Tibial artery (tissue), 4 donors: ENCODE measurements at regions of chr1 and their contacts with region 1.

Region 1: DNA sequence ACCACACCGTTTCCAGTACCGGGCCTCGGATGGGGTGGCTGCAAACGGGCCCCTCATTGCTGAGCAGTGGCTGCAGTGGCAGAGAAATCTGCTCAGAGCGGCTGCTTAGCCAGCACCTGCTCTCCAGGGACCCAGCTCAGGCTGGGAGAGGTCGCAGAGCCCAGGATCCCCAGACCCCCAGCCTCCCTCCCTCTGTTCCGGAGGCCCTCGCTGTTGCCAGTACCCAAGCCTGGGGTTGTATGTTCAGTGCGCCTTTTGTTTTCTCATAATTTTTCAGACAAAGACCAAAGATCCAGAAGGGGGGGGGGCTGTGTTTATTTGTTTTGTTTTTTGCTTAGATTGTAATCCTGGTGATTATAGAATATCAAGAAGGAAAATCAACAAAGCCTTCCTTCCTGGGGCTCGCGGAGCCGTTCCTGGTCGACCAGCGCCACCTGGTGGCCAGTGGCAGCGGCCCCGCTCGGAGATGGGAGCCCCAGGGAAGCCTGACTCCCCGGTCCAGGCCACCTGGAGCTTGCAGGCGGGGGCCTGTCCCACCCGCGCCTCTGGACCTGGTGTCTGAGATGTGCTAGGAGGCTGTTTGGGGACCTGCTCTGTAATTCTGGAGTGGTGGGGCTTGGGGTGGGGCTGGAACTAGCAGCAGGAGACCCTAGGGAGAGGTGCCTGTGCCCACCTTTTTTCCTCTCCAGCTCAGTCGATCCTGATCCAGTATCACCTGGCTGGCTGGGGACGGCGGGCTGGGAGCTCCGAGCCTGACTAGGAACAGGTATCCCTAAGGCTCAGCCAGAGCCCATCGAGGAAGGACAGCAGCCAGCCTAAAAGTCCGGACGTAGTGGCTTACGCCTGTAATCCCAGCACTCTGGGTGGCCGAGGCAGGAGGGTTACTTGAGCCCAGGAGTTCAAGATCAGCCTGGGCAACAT is 123.9 kb upstream of the VAMP3 start:
- DNase-seq: peak in 1 of 2 donors; percentile 47
- H3K4me3 ChIP-seq: no peak overlapping the region
- H3K27ac ChIP-seq: no peak overlapping the region
- H3K4me1 ChIP-seq: peaks cover 0 to 9% (median 3%) of the 10 kb centered on the region in 4 donors
- H3K27me3 ChIP-seq: peaks cover 0 to 39% of the 10 kb centered on the region in 2 donors
- CTCF ChIP-seq: peak; percentile 91 to 96

Region 2: DNA sequence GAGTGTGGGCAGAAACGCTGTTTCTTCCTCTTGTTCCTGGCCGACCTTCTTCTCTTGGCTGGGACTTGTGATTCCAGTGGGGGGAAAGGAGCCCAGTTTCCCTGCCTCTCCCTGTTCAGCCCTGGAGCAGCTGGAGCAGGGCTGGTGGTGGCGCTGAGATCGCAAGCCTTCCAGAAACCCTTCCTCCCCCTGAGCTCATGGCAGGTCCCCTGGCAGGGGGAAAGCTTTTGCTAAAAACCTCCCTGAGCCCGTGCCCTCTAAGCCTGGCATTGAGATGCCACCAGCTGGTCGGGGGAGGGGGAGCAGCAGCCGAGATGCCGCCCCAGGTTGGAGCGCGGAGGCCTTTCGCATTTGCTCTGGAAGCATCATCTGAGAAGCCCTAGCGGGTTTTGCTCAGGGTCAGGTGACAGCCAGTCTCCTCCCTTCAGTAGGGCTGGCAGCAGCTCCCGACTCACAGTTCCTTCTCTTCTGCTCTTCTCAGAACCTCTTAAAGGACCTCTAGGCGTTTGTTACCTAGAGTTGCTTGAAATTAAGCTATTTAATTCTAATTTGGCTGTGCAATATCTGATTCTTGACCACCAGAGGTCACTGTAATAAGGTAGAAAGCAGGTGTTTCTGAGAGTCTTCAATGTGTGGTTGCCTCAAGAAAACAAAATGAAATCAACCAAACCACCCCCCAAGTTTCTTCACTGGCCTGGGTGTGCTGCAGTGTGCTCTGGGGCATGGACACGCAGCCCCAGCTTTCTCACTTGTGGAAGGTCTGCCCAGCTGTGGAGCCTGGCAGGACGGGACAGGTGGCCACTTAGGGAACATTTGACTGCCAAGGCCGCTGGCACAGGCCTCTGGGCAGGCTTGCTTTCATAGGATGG is 604.7 kb before region 1 on chr1:
- intact Hi-C with region 1: loop called (anchors 5 kb)
- DNase-seq: no peak
- H3K4me3 ChIP-seq: no peak overlapping the region
- H3K27ac ChIP-seq: no peak overlapping the region
- H3K4me1 ChIP-seq: no peaks in the 10 kb centered on the region
- H3K27me3 ChIP-seq: peaks cover 0 to 47% of the 10 kb centered on the region in 2 donors
- CTCF ChIP-seq: peak; percentile 38 to 41

Region 3: GRCh38 chr1:7379445-7379971 is 267.7 kb before region 1 on chr1:
- intact Hi-C with region 1: no loop called
- DNase-seq: peak in 1 of 2 donors; percentile 21
- H3K4me3 ChIP-seq: no peak overlapping the region
- H3K27ac ChIP-seq: no peak overlapping the region
- H3K4me1 ChIP-seq: peaks cover 0 to 5% (median 0%) of the 10 kb centered on the region in 4 donors
- H3K27me3 ChIP-seq: peaks cover 0 to 8% of the 10 kb centered on the region in 2 donors
- CTCF ChIP-seq: no peak

Region 4: DNA sequence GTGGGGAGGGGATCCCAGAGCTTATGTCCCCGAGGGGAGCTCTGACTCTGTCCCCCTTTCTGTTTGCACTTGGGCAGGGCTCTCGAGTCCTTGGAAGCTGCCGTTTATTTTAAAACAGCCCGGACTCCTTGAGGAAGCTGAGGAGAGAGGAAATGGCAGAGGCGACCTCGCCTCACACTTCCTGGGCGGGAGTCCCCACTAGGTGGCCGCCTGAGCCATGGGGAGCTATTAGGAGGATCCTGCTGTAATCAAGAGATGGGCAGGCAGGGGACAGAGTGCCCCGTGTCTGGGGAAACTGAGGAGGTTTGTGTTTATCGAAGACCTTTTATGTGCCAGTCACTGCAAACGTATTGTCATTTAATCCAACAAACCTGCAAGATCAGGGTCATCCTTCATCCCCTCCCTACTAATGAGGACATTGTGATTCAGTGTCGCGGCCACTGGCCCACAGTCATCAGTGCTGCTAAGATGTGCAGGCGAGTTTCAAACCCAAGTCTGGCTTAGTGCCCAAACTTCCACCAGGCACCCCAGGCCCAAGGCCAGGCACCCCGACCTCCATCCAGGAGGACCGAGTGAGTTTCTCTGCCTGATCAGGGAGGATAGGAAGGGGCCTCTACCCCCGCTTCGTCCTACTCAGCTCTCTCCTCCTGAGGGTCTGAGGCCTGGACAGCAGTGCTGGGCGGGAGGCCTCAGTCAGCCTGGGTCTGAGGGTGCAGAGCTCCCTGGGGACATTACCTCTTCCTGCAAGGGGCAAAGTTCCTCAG is 193.0 kb before region 1 on chr1:
- intact Hi-C with region 1: loop called (anchors 5 kb)
- DNase-seq: no peak
- H3K4me3 ChIP-seq: no peak overlapping the region
- H3K27ac ChIP-seq: no peak overlapping the region
- H3K4me1 ChIP-seq: no peaks in the 10 kb centered on the region
- H3K27me3 ChIP-seq: no peaks in the 10 kb centered on the region
- CTCF ChIP-seq: peak; percentile 29 to 31